ENCODE measurements at regions of chr11 and their contacts with region 1.

Region 1: GRCh38 chr11:122439911-122440810 is 215.4 kb upstream of the UBASH3B start:
- DNase-seq: peak; percentile 15 to 48
- ATAC-seq: peak; percentile 73 to 81
- H3K4me3 ChIP-seq: peak overlapping the region; percentile 52
- H3K27ac ChIP-seq: peak overlapping the region; percentile 80 to 85
- H3K4me1 ChIP-seq: peaks cover 18% of the 10 kb centered on the region
- CTCF ChIP-seq: no peak
- EP300 ChIP-seq: no peak
- POLR2A ChIP-seq: no peak
- RAD21 ChIP-seq: no peak

Region 2: DNA sequence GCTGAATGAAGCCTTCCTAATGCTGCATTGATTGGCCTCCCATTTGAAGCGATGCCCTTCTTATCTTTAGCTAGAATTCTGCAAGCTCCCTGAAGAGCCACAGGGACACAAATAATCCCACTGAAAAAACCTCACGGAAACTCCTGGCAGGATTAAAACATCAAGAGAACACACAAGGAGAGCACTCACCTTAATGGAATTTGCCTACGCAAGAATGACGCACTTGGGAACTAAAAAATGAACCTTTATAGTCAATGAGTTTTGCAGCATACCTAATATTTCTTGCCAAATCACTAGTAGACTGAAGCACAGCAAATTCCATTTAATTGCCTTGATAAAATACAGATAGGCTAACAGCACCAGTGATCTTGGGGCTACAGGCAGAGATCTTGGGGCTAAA is 17.5 kb before region 1 on chr11:
- CTCF ChIA-PET with region 1: interaction called, 3 read pairs
- POLR2A ChIA-PET with region 1: interaction called, 10 read pairs
- DNase-seq: peak in 1 of 2 experiments; percentile 77
- ATAC-seq: peak; percentile 77 to 81
- H3K4me3 ChIP-seq: peak overlapping the region; percentile 48
- H3K27ac ChIP-seq: peak overlapping the region; percentile 91 to 93
- H3K4me1 ChIP-seq: peaks cover 20% of the 10 kb centered on the region
- CTCF ChIP-seq: no peak
- EP300 ChIP-seq: peak; percentile 77 to 87; a peak in 4 of 5 replicates
- POLR2A ChIP-seq: no peak
- RAD21 ChIP-seq: no peak

Measured in A549 (cell line).